ENCODE measurements at regions of chr1 and their contacts with region 1.

Region 1: GRCh38 chr1:53837924-53838652 is at the start of gene NDC1:
- DNase-seq: peak; percentile 96
- H3K4me3 Mint-ChIP-seq: peak within 1 kb of the TSS; percentile 100
- H3K27ac Mint-ChIP-seq: peak within 1 kb of the TSS; percentile 100
- H3K4me1 Mint-ChIP-seq: peaks cover 25% of the 10 kb centered on the region
- H3K27me3 Mint-ChIP-seq: no peaks in the 10 kb centered on the region
- total RNA-seq, gene NDC1: 39.7 and 40.8 TPM in 2 replicates

Region 2: DNA sequence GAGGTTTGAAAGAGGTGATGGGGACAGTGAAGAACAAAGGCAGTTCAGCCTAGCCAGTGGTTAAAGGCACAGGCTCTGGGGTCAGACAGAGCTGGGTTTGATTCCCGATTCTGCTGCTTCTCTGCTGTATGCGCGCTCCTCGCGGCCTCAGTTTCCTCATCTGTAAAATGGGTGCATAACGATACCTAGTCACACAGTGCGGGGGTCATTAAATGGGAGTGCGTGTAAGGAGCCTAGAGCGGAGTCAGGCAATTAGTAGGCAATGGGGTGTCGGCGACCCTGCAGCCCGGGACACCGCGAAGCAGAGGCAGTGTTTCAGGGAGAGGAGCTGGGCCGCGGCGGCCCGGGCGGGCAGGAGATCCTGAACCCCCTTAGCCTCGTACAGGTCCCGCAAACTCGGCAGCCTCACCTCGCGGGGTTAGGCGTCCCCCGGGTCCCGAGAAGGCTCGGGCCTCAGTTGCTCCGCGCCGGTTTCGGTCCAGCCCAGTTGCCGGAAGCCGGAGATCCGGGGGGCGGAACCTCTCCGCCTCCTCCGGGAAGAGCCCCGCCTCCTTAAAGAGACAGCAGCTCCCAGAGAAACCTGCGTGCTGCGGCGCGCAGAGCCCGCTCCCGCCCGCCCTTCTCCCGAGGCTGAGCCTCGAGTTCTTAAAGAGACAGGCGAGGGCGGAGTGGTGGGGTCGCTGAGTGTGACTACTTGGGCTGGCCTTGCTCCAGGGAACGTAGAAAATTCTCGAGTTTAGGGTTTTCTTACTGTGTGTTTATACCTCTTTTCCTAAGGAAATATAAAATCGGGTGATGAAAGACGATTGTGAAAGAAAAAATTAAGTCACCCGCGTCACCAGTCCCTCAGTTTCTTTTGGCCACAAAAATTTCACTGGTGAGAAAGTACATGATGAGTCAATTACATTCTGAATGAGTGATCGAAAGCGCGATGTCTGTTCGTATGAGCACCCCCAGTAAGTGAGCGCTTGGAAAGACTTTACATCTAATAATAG is 51.5 kb after region 1 on chr1 and contains the start of gene YIPF1:
- intact Hi-C with region 1: loop called (anchors 1 kb)
- DNase-seq: peak; percentile 98
- H3K4me3 Mint-ChIP-seq: peak within 1 kb of the TSS; percentile 98
- H3K27ac Mint-ChIP-seq: peak within 1 kb of the TSS; percentile 90
- H3K4me1 Mint-ChIP-seq: peaks cover 34% of the 10 kb centered on the region
- H3K27me3 Mint-ChIP-seq: no peaks in the 10 kb centered on the region
- total RNA-seq, gene YIPF1: 14.6 and 15.6 TPM in 2 replicates

Measured in activated CD4-positive, alpha-beta T cell treated with anti-CD3 and anti-CD28 coated beads, Interleukin-2, amount 10 ng/mL, durations not matched to agents 24 days and 14 days (primary cell).